HepG2 (cell line): ENCODE measurements at regions of chr6 and their contacts with region 1.

Region 1: GRCh38 chr6:157726892-157727628 is 96.0 kb upstream of the SNX9 start:
- DNase-seq: no peak
- ATAC-seq: no peak
- H3K4me3 ChIP-seq: no peak overlapping the region; a peak in 1 of 6 replicates
- H3K27ac ChIP-seq: peak overlapping the region; percentile 94
- H3K4me1 ChIP-seq: peaks cover 72% of the 10 kb centered on the region
- H3K27me3 ChIP-seq: no peaks in the 10 kb centered on the region
- CTCF ChIP-seq: no peak
- EP300 ChIP-seq: no peak
- POLR2A ChIP-seq: no peak
- RAD21 ChIP-seq: no peak

Region 2: GRCh38 chr6:157688960-157689599 is 38.0 kb before region 1 on chr6:
- CTCF ChIA-PET with region 1: no interaction called
- POLR2A ChIA-PET with region 1: no interaction called
- in situ Hi-C with region 1: no loop called
- intact Hi-C with region 1: no loop called
- DNase-seq: no peak
- ATAC-seq: peak; percentile 53
- H3K4me3 ChIP-seq: 0 out of 6 replicates have a peak overlapping the region, but pooled peaks of 1 of the 3 experiments have one; percentile 6
- H3K27ac ChIP-seq: no peak overlapping the region
- H3K4me1 ChIP-seq: no peaks in the 10 kb centered on the region
- H3K27me3 ChIP-seq: peaks cover 5 to 48% of the 10 kb centered on the region in 2 experiments; a peak in 3 of 5 replicates
- CTCF ChIP-seq: peak; percentile 46
- EP300 ChIP-seq: no peak
- POLR2A ChIP-seq: no peak
- RAD21 ChIP-seq: no peak

Region 3: GRCh38 chr6:157715765-157716164 is 11.3 kb before region 1 on chr6:
- CTCF ChIA-PET with region 1: no interaction called
- POLR2A ChIA-PET with region 1: interaction called, 34 read pairs
- in situ Hi-C with region 1: no loop called
- intact Hi-C with region 1: no loop called
- DNase-seq: no peak
- ATAC-seq: peak; percentile 31; the same call in 2 of the 3 replicates
- H3K4me3 ChIP-seq: no peak overlapping the region
- H3K27ac ChIP-seq: no peak overlapping the region
- H3K4me1 ChIP-seq: peaks cover 27% of the 10 kb centered on the region
- H3K27me3 ChIP-seq: peaks cover 6 to 28% of the 10 kb centered on the region in 2 experiments; a peak in 3 of 5 replicates
- CTCF ChIP-seq: no peak
- EP300 ChIP-seq: no peak
- POLR2A ChIP-seq: no peak
- RAD21 ChIP-seq: no peak

Region 4: DNA sequence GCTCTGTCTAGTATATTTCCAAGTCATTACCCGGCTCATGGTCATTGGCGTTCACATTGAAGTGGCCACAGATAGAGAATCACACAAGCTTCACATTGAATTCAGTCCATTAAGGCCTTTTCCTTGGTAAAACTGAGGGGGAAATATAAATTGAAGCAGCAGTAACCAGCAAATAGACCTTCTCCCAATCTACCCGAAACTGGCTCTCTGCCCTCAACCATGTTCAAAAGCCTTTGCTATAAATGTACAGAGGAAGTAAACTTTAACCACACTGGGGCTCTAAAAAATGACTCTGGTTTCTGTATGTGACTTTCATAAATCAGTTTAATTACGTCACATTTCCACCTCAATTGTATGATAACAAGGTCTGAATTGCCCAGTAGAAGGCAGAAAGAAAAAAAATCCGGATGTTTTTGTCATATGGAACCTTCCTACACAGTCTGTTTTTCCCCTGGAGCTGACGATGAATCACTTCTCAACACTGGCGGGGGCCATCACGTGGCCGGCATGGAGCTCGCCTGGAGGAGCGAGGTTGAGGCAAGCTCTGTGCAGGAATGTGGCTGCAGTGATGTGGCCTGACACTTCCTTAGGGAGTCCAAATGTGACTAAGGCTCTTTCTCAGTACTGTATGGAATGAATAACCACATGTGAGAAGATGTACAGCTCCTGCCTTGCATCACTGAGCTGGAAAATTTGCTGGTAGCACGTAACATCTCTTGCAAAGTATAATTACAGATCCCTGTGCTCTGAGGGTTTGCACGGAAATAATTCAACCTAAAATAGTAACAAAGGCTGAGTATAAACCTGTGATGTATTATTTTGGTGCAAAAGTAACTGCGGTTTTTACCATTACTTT is 37.3 kb after region 1 on chr6:
- CTCF ChIA-PET with region 1: no interaction called
- POLR2A ChIA-PET with region 1: interaction called, 12 read pairs
- in situ Hi-C with region 1: no loop called
- intact Hi-C with region 1: loop called (anchors 5 kb)
- DNase-seq: peak; percentile 77
- ATAC-seq: peak; percentile 68
- H3K4me3 ChIP-seq: peak overlapping the region in 1 of 3 experiments; percentile 5; a peak in 1 of 6 replicates
- H3K27ac ChIP-seq: no peak overlapping the region
- H3K4me1 ChIP-seq: peaks cover 51% of the 10 kb centered on the region
- H3K27me3 ChIP-seq: peaks cover 0 to 11% of the 10 kb centered on the region in 2 experiments; a peak in 4 of 5 replicates
- CTCF ChIP-seq: peak; percentile 48
- EP300 ChIP-seq: peak in 1 of 2 experiments; percentile 42; a peak in 1 of 4 replicates
- POLR2A ChIP-seq: no peak
- RAD21 ChIP-seq: no peak